ENCODE measurements at regions of chr3 and their contacts with region 1.

Region 1: DNA sequence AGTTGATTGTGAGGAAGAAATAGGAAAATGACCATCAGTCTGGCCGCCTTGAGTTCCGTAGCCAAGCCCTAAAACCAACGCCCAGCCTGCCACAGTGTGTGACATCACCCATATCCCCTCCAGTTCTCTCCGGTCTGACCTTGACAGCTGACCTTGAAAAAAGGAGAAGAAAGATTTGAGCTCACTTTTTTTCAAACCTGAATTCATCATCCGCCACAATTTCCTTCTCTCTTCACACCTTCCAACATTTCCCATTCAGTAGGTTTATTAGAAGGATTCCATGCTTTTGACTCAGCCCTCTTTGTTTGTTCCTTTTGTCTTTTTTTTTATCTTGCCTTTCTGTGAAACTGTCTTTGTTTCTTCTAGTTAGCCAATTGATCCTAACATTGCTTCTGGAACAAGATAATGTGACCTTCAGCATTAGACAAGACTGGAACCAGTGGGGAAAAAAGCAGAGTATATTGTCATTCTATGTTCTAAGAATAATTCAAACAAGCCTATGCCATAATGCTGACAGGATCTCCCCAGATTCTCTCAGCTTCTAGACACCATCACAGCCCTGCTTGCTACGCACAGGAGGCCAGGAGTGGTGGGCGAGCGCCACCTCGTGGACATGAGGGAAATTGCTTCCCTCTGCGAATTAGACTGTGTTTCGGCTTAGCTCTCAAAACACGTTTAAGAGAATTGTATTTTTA is 283.1 kb downstream of the FGF12 start:
- DNase-seq: peak; percentile 13
- H3K4me3 ChIP-seq: no peak overlapping the region
- H3K27ac ChIP-seq: no peak overlapping the region
- H3K27me3 ChIP-seq: no peaks in the 10 kb centered on the region
- CTCF ChIP-seq: peak; percentile 99

Region 2: GRCh38 chr3:190811775-190812480 is 1632.3 kb before region 1 on chr3:
- CTCF ChIA-PET with region 1: interaction called, 23 read pairs
- POLR2A ChIA-PET with region 1: no interaction called
- DNase-seq: peak; percentile 36
- H3K4me3 ChIP-seq: peak overlapping the region; percentile 52
- H3K27ac ChIP-seq: no peak overlapping the region
- H3K27me3 ChIP-seq: no peaks in the 10 kb centered on the region
- CTCF ChIP-seq: peak; percentile 82

Region 3: DNA sequence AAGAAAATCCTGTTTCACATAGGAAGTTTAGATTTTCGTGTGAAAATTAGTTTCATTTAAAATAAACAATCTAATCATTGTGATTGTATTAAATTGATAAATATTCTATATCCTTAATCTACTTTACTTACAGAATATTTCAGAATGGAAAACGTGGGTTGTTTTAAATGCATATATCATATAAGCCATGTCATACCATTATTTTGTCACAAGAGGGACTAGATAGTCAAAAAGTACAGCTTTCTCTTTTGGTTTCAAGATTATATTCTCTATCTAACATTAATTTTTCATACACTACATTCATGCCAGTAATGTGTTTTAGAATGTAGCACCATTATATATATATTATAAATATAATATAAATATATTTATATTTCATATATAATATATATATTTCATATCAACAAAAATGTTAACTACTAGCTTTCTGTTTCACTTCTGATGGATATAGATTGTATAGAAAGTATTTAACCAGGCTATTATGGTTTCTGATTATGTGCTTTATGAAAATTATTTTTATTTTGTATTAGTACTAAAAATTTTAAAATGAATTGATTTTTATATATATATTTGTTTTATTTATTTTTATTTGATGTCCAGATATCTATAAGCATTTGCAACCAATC is 1199.9 kb before region 1 on chr3:
- CTCF ChIA-PET with region 1: interaction called, 13 read pairs
- POLR2A ChIA-PET with region 1: no interaction called
- DNase-seq: no peak
- H3K4me3 ChIP-seq: no peak overlapping the region
- H3K27ac ChIP-seq: no peak overlapping the region
- H3K27me3 ChIP-seq: no peaks in the 10 kb centered on the region
- CTCF ChIP-seq: peak; percentile 57

Region 4: GRCh38 chr3:192054881-192055280 is 389.4 kb before region 1 on chr3:
- CTCF ChIA-PET with region 1: no interaction called
- POLR2A ChIA-PET with region 1: no interaction called
- DNase-seq: no peak
- H3K4me3 ChIP-seq: no peak overlapping the region
- H3K27ac ChIP-seq: no peak overlapping the region
- H3K27me3 ChIP-seq: no peaks in the 10 kb centered on the region
- CTCF ChIP-seq: no peak

Region 5: GRCh38 chr3:192122832-192123594 is 321.2 kb before region 1 on chr3:
- CTCF ChIA-PET with region 1: no interaction called
- POLR2A ChIA-PET with region 1: no interaction called
- DNase-seq: no peak
- H3K4me3 ChIP-seq: no peak overlapping the region
- H3K27ac ChIP-seq: no peak overlapping the region
- H3K27me3 ChIP-seq: no peaks in the 10 kb centered on the region
- CTCF ChIP-seq: no peak

Region 6: DNA sequence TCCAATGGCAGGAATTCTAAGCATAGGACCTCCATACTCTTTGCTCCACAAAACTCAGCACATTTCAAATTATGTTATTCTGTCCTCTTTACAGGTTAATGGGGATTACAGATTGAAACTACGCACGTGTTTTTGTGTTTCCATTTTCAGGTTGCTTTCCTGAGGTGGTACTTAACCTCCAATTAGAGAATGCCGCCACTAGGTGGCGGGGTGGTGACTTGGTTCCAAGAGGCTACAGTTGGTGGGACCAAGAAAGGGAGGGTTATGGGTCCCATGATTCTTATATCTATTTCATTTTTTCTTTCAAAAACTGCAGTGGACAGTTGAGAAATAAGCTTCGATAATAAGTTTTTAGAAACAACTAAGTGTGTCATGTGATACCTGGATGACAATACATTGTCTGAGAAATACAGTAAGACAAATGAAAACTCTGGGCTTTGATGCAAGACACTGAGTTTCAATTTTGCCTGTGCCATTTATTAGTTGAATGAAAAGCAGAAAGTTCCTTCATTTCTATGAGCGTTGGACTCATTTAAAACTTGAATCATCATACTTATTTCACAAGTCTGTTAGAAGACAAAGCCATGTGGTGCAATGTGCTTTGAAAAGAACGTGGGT is 255.9 kb before region 1 on chr3:
- CTCF ChIA-PET with region 1: interaction called, 12 read pairs
- POLR2A ChIA-PET with region 1: no interaction called
- DNase-seq: no peak
- H3K4me3 ChIP-seq: no peak overlapping the region
- H3K27ac ChIP-seq: no peak overlapping the region
- H3K27me3 ChIP-seq: no peaks in the 10 kb centered on the region
- CTCF ChIP-seq: peak; percentile 42

Region 7: GRCh38 chr3:192423003-192423349 is 21.3 kb before region 1 on chr3:
- CTCF ChIA-PET with region 1: interaction called, 16 read pairs
- POLR2A ChIA-PET with region 1: no interaction called
- DNase-seq: no peak
- H3K4me3 ChIP-seq: no peak overlapping the region
- H3K27ac ChIP-seq: no peak overlapping the region
- H3K27me3 ChIP-seq: no peaks in the 10 kb centered on the region
- CTCF ChIP-seq: no peak

Measured in AG04450 (cell line).